ENCODE measurements at regions of chr22 and their contacts with region 1.

Region 1: DNA sequence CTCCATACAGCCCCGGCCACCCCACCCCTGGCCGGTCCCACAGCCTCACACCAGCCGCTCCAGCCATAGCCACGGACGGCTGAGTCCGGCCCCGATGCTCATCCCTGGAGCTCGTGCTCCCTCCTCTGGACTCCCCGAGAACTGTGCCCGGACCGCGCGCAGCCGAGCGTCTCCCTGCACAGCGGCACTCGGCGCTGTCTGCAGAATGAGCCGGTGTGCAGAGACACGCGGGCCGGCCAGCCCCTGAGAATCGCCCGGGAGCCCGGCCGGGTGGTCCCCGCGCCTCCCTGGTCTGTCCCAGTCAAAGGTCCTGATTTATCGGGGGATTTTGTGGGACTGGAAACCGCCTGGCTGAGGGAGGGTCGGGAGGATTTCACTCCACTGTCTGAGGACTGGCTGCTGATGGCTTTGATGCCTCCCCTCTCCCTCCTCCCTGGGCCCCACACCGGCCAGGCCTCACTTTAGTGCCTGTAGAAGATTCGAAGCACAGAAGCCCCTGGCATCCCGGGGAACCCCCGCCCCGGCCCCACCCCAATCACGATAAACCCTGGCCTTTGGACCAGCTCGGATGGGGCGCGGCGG is 102.7 kb downstream of the BRD1 start:
- DNase-seq: peak; percentile 61 to 69
- ATAC-seq: peak; percentile 81 to 93 (median 91)
- H3K4me3 ChIP-seq: peak overlapping the region; percentile 10 to 52 (median 42)
- H3K27ac ChIP-seq: no peak overlapping the region
- H3K4me1 ChIP-seq: peaks cover 0 to 14% (median 5%) of the 10 kb centered on the region in 9 donors
- H3K27me3 ChIP-seq: peaks cover 7 to 74% (median 65%) of the 10 kb centered on the region in 7 donors
- CTCF ChIP-seq: peak; percentile 60 to 81 (median 77)

Region 2: GRCh38 chr22:49046546-49047361 is 678.2 kb before region 1 on chr22:
- intact Hi-C with region 1: loop called in 1 of 10 experiments (anchors 10 kb)
- DNase-seq: peak; percentile 24 to 42
- ATAC-seq: peak in 7 of 8 donors; percentile 47 to 75 (median 70)
- H3K4me3 ChIP-seq: no peak overlapping the region
- H3K27ac ChIP-seq: no peak overlapping the region
- H3K4me1 ChIP-seq: no peaks in the 10 kb centered on the region
- H3K27me3 ChIP-seq: peaks cover 0 to 70% (median 29%) of the 10 kb centered on the region in 7 donors
- CTCF ChIP-seq: peak; percentile 10 to 58 (median 48)

Region 3: GRCh38 chr22:49657275-49657975 is 67.6 kb before region 1 on chr22:
- intact Hi-C with region 1: loop called in 1 of 10 experiments (anchors 5 kb)
- DNase-seq: peak; percentile 66 to 90
- ATAC-seq: peak; percentile 80 to 91 (median 89)
- H3K4me3 ChIP-seq: peak overlapping the region; percentile 34 to 76 (median 65)
- H3K27ac ChIP-seq: peak overlapping the region; percentile 75 to 92 (median 87)
- H3K4me1 ChIP-seq: peaks cover 0 to 52% (median 30%) of the 10 kb centered on the region in 9 donors
- H3K27me3 ChIP-seq: peaks cover 0 to 30% (median 0%) of the 10 kb centered on the region in 7 donors
- CTCF ChIP-seq: peak in 1 of 9 donors; percentile 12

Region 4: GRCh38 chr22:49760630-49761571 is 35.9 kb after region 1 on chr22:
- intact Hi-C with region 1: no loop called
- DNase-seq: no peak
- ATAC-seq: peak in 1 of 8 donors; percentile 20
- H3K4me3 ChIP-seq: no peak overlapping the region
- H3K27ac ChIP-seq: no peak overlapping the region
- H3K4me1 ChIP-seq: peaks cover 0 to 6% (median 0%) of the 10 kb centered on the region in 9 donors
- H3K27me3 ChIP-seq: peaks cover 0 to 10% (median 4%) of the 10 kb centered on the region in 7 donors
- CTCF ChIP-seq: no peak